ENCODE measurements at regions of chr6 and their contacts with region 1.

Region 1: DNA sequence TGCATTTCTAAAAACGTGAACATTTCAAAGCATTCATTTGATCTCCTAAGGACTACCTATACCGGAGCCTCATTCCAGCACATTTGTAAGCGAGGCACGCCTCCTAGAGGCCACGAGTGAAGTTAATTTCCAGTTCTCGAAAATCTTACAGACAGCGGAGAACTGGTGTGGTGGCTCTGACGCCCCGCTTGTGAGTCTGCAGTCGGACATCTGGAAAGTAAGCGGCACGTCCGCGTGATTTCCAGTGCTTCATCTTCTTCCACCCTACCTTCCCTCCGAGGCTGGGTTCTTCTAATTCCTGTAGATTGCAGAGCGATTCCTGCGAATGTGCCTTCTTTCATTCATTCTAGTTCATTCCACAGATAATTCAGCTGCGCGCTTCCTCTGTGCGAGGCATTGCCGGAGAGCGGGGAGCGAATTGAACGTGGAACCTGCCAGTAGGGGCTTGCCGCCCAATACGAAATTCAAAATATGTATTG is 810 bp upstream of the PRIM2 start:
- DNase-seq: peak; percentile 66 to 90 (median 77)
- ATAC-seq: peak; percentile 84 to 87 (median 85)
- H3K4me3 ChIP-seq: peak overlapping the region; percentile 69 to 96
- H3K4me3 Mint-ChIP-seq: peak overlapping the region; percentile 94 to 99 (median 98)
- H3K27ac ChIP-seq: peak overlapping the region; percentile 49
- H3K27ac Mint-ChIP-seq: peak overlapping the region; percentile 84 to 91
- H3K4me1 ChIP-seq: peaks cover 9 to 13% of the 10 kb centered on the region in 2 experiments
- H3K4me1 Mint-ChIP-seq: peaks cover 31 to 42% (median 32%) of the 10 kb centered on the region in 3 donors
- H3K27me3 ChIP-seq: peaks cover 0 to 11% of the 10 kb centered on the region in 2 experiments
- H3K27me3 Mint-ChIP-seq: peaks cover 0 to 4% of the 10 kb centered on the region in 2 donors

Region 2: GRCh38 chr6:56902641-56903464 is 413.8 kb before region 1 on chr6:
- CTCF ChIA-PET with region 1: interaction called, 52 to 108 read pairs
- POLR2A ChIA-PET with region 1: interaction called in 1 of 2 experiments, 4 read pairs
- DNase-seq: peak in 1 of 35 experiments; percentile 59
- ATAC-seq: no peak
- H3K4me3 ChIP-seq: no peak overlapping the region
- H3K4me3 Mint-ChIP-seq: no peak overlapping the region
- H3K27ac ChIP-seq: no peak overlapping the region
- H3K27ac Mint-ChIP-seq: no peak overlapping the region
- H3K4me1 ChIP-seq: peaks cover 0 to 4% of the 10 kb centered on the region in 2 experiments
- H3K4me1 Mint-ChIP-seq: peaks cover 0 to 2% (median 0%) of the 10 kb centered on the region in 3 donors
- H3K27me3 ChIP-seq: peaks cover 0 to 3% of the 10 kb centered on the region in 2 experiments
- H3K27me3 Mint-ChIP-seq: peaks cover 4 to 6% of the 10 kb centered on the region in 2 donors

Region 3: GRCh38 chr6:56977192-56977591 is 339.4 kb before region 1 on chr6:
- CTCF ChIA-PET with region 1: no interaction called
- POLR2A ChIA-PET with region 1: no interaction called
- DNase-seq: no peak
- ATAC-seq: no peak
- H3K4me3 ChIP-seq: no peak overlapping the region
- H3K4me3 Mint-ChIP-seq: no peak overlapping the region
- H3K27ac ChIP-seq: no peak overlapping the region
- H3K27ac Mint-ChIP-seq: no peak overlapping the region
- H3K4me1 ChIP-seq: no peaks in the 10 kb centered on the region
- H3K4me1 Mint-ChIP-seq: no peaks in the 10 kb centered on the region
- H3K27me3 ChIP-seq: no peaks in the 10 kb centered on the region
- H3K27me3 Mint-ChIP-seq: peaks cover 0 to 3% of the 10 kb centered on the region in 2 donors

Region 4: DNA sequence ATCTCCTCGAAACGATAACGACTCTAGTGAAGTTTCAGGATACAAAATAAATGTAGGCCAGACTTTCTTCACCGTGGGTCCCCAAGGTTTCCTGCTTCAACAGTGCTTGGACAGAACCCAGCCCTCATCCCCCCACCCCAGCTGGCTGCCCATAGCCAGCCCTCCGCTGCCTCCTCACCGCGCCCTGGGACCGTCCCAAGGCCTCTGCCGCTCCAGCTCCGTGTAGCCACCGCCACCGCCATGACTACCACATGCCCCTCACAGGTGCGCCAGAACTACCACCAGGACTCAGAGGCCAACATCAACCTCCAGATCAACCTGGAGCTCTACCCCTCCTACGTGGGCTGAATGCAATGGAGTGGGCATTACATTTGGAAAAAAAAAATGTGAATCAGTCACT is 312.3 kb before region 1 on chr6:
- CTCF ChIA-PET with region 1: no interaction called
- POLR2A ChIA-PET with region 1: interaction called in 1 of 2 experiments, 10 read pairs
- DNase-seq: no peak
- ATAC-seq: no peak
- H3K4me3 ChIP-seq: no peak overlapping the region
- H3K4me3 Mint-ChIP-seq: no peak overlapping the region
- H3K27ac ChIP-seq: no peak overlapping the region
- H3K27ac Mint-ChIP-seq: no peak overlapping the region
- H3K4me1 ChIP-seq: no peaks in the 10 kb centered on the region
- H3K4me1 Mint-ChIP-seq: no peaks in the 10 kb centered on the region
- H3K27me3 ChIP-seq: peaks cover 0 to 5% of the 10 kb centered on the region in 2 experiments
- H3K27me3 Mint-ChIP-seq: peaks cover 11 to 13% of the 10 kb centered on the region in 2 donors

Region 5: DNA sequence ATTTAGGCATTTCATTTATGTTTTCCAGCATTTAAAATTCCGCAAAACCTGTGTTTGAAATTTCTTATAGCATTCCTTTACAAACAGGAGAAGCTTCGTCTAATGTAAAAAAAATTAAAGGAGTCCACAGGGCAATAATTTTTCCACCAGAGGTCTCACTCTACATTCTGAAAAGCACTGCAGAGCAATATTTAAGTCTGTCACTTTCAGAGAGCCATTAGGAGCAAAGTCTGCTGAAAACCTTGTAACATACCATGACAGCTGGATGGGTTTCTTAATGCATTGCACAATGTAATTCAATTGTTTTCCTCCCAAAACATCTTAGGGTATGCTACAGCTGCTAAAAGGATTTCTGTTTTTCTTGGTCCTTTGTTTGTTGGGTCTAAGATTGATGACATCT is 126.5 kb before region 1 on chr6:
- CTCF ChIA-PET with region 1: interaction called in 1 of 2 experiments, 10 read pairs
- POLR2A ChIA-PET with region 1: no interaction called
- DNase-seq: no peak
- ATAC-seq: no peak
- H3K4me3 ChIP-seq: no peak overlapping the region
- H3K4me3 Mint-ChIP-seq: no peak overlapping the region
- H3K27ac ChIP-seq: no peak overlapping the region
- H3K27ac Mint-ChIP-seq: peak overlapping the region in 1 of 2 donors; percentile 34
- H3K4me1 ChIP-seq: no peaks in the 10 kb centered on the region
- H3K4me1 Mint-ChIP-seq: peaks cover 0 to 5% (median 3%) of the 10 kb centered on the region in 3 donors
- H3K27me3 ChIP-seq: no peaks in the 10 kb centered on the region
- H3K27me3 Mint-ChIP-seq: no peaks in the 10 kb centered on the region

Region 6: GRCh38 chr6:57267586-57268293 is 48.9 kb before region 1 on chr6:
- CTCF ChIA-PET with region 1: interaction called, 14 to 22 read pairs
- POLR2A ChIA-PET with region 1: no interaction called
- DNase-seq: peak in 26 of 35 experiments; percentile 3 to 60 (median 20)
- ATAC-seq: peak in 1 of 4 experiments; percentile 42
- H3K4me3 ChIP-seq: no peak overlapping the region
- H3K4me3 Mint-ChIP-seq: no peak overlapping the region
- H3K27ac ChIP-seq: no peak overlapping the region
- H3K27ac Mint-ChIP-seq: no peak overlapping the region
- H3K4me1 ChIP-seq: no peaks in the 10 kb centered on the region
- H3K4me1 Mint-ChIP-seq: no peaks in the 10 kb centered on the region
- H3K27me3 ChIP-seq: no peaks in the 10 kb centered on the region
- H3K27me3 Mint-ChIP-seq: peaks cover 12 to 17% of the 10 kb centered on the region in 2 donors

Measured in T-cell (primary cell).